Activated CD4-positive, alpha-beta memory T cell treated with anti-CD3 and anti-CD28 coated beads for 36 hours (primary cell): ENCODE measurements at regions of chr12 and their contacts with region 1.

Region 1: DNA sequence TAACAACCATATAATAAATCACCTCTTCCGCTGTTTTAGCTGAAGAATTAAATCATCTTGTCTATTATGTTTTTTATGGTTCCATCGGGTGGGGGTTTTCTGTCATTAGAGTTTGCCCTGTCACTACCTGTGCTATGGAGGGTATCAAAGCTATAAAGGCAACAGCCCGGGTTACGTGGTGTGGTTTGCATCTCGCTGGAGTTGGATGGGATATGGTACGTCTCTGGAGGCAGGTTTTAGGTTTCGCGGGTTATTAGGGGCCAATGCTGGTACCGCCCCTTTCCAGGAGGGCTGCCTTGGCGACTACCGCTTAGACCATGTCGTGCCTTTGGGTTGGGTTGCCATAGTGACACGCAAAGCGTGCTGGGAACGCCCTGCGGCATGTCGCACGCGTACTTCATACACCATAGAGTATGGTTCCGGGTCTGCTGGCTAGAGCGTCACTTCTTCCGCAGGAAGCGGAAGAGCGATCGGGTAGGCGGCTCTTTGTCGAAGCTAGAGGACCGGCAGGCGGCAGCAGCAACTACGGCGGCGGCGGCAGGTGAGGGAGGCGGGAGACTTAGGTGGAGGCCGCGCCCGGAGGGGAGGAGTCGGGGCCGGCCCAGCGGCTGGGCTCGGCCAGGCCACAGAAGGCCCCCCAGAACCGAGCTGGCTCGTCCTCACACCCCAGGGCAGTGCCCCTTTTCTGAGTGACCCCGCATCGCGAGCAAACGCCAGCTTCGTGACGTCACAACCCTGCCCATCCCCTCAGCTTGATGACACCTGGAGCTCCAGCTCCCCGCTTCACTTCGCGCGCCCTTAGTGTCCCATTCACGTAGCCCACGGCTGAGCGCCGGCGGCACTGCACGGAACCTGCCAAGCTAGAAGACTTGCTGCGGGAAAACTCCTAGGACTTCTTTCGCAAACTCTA is at the start of gene ZC3H10:
- DNase-seq: peak; percentile 99
- H3K4me3 Mint-ChIP-seq: peak within 1 kb of the TSS; percentile 99
- H3K27ac Mint-ChIP-seq: peak within 1 kb of the TSS; percentile 100
- H3K4me1 Mint-ChIP-seq: peaks cover 29% of the 10 kb centered on the region
- H3K27me3 Mint-ChIP-seq: no peaks in the 10 kb centered on the region
- total RNA-seq, gene ZC3H10: 5.1 to 7.2 TPM

Region 2: DNA sequence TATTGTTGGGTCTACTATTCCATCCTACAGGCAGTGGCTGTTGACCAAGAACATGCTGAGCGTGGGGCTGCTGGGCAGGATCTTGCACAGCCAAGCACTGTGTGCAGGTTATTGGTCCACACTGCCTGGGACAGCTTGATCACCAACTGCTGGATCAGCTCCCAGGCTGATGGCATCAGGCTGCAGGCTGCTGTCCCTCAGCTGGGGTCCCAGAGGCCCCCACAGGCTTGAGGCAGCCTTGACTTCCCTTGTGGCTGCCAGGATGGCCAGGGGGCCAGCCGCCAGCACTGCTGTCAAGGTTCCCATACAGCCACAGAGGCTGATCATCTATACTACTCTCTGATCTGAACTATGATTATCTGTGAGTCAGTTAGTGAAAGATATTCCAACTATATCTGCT is 536.0 kb before region 1 on chr12:
- CTCF ChIA-PET with region 1: no interaction called
- POLR2A ChIA-PET with region 1: no interaction called
- intact Hi-C with region 1: no loop called
- DNase-seq: no peak
- H3K4me3 Mint-ChIP-seq: no peak overlapping the region
- H3K27ac Mint-ChIP-seq: no peak overlapping the region
- H3K4me1 Mint-ChIP-seq: no peaks in the 10 kb centered on the region
- H3K27me3 Mint-ChIP-seq: peaks cover 28% of the 10 kb centered on the region

Region 3: DNA sequence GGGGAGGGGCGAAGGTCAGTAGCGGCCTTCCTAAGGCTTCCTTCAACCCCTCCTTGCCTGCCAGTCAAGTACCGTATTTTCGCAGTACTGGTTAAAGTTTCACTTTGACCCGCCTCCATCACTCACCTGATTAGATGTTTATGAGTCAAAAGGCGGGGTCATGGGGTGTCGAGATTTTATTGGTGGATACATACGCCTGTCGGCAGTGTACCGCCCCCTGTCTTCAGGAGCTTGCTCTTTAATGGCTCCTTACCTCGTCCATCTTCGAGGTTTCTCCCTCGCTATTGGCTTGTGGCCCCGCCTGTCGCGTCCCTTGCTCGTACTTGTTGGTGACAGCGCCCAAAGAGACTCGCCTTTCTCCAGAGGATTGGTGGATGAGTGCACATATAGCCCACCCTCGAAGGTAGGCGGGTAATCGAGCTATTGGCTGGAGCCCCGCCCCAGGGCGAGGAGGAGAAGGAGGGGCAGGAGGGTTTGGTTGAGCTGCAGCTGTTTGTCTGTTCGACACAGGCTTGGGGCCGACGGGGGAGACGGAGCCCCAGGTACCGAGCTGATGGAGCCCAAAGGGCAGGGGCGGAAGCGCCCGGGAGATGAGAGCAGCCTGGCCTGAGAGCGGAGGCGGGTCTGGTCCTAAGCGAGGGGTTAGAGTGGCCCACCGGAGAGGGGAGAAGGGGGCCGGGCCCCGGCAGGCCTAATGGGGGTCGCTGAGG is 144.3 kb before region 1 on chr12 and contains the start of gene RAB5B:
- CTCF ChIA-PET with region 1: interaction called, 3 read pairs
- POLR2A ChIA-PET with region 1: interaction called, 10 read pairs
- intact Hi-C with region 1: loop called (anchors 1 kb)
- DNase-seq: peak; percentile 99
- H3K4me3 Mint-ChIP-seq: no peak within 1 kb of the TSS
- H3K27ac Mint-ChIP-seq: no peak within 1 kb of the TSS
- H3K4me1 Mint-ChIP-seq: peaks cover 19% of the 10 kb centered on the region
- H3K27me3 Mint-ChIP-seq: no peaks in the 10 kb centered on the region
- total RNA-seq, gene RAB5B: 44.8 to 46.4 TPM

Region 4: DNA sequence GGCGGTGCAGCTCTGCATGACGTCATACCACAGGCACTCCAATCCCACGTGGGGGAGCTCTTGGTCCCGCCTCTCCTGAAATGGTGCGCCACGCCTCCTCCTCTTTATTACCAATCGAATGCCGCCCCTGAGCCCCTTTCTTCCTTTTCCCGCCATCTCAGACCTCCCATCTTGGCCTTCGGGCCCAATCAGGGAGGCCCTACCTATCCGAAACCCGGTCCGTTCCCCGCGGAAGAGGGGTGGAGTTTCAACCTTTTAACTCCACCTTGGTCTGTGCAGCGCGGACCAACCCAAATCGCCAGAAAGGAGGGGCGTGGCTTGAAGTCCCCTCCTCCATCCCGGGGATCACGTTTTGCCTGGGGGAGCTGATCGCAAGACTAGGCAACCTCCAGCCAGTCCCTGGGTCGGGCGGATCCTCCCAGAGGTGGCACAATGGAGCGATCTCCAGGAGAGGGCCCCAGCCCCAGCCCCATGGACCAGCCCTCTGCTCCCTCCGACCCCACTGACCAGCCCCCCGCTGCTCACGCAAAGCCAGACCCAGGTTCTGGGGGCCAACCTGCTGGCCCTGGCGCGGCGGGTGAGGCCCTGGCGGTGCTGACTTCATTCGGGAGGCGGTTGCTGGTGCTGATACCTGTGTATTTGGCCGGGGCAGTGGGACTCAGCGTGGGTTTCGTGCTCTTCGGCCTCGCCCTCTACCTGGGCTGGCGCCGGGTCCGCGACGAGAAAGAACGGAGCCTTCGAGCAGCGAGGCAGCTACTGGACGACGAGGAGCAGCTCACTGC is 10.0 kb after region 1 on chr12 and contains the start of gene ESYT1:
- CTCF ChIA-PET with region 1: interaction called, 62 read pairs
- POLR2A ChIA-PET with region 1: interaction called, 45 read pairs
- intact Hi-C with region 1: loop called (anchors 1 kb)
- DNase-seq: peak; percentile 99
- H3K4me3 Mint-ChIP-seq: peak within 1 kb of the TSS; percentile 97
- H3K27ac Mint-ChIP-seq: peak within 1 kb of the TSS; percentile 93
- H3K4me1 Mint-ChIP-seq: peaks cover 60% of the 10 kb centered on the region
- H3K27me3 Mint-ChIP-seq: no peaks in the 10 kb centered on the region
- total RNA-seq, gene ESYT1: 142 to 146 TPM

Region 5: DNA sequence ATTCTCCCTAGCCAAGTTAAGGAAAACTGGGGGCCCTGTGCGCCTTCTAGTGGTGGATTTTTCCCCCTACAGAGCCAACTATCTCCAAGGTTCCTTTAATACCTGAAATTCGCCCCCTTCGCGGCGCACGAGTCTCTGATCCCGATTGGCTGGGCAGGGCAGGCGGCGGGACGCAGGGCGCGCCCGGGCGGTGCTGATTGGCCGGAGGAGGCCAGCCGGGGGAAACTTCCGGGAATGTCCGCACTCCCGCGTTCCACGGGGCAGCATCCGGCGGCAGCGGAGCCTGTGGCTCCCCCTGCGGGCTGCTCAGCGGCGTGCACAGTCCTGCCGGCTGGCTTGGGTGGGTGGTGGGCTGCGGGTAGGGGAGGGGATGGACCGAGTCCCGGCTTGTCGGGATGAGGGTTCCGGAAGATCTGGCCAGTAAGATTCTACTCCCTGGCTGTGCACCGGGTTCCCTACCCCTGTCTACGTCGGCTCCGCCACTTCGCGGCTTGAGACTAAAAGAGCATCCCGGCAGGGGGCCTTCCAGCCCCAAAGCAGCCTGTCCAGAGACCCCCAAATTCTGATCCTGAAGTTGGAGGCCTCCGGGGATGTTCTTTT is 106.2 kb after region 1 on chr12 and contains the start of gene NABP2:
- CTCF ChIA-PET with region 1: interaction called, 38 read pairs
- POLR2A ChIA-PET with region 1: interaction called, 20 read pairs
- intact Hi-C with region 1: loop called (anchors 1 kb)
- DNase-seq: peak; percentile 97
- H3K4me3 Mint-ChIP-seq: peak within 1 kb of the TSS; percentile 96
- H3K27ac Mint-ChIP-seq: peak within 1 kb of the TSS; percentile 80
- H3K4me1 Mint-ChIP-seq: peaks cover 33% of the 10 kb centered on the region
- H3K27me3 Mint-ChIP-seq: no peaks in the 10 kb centered on the region
- total RNA-seq, gene NABP2: 62.0 to 62.2 TPM

Region 6: DNA sequence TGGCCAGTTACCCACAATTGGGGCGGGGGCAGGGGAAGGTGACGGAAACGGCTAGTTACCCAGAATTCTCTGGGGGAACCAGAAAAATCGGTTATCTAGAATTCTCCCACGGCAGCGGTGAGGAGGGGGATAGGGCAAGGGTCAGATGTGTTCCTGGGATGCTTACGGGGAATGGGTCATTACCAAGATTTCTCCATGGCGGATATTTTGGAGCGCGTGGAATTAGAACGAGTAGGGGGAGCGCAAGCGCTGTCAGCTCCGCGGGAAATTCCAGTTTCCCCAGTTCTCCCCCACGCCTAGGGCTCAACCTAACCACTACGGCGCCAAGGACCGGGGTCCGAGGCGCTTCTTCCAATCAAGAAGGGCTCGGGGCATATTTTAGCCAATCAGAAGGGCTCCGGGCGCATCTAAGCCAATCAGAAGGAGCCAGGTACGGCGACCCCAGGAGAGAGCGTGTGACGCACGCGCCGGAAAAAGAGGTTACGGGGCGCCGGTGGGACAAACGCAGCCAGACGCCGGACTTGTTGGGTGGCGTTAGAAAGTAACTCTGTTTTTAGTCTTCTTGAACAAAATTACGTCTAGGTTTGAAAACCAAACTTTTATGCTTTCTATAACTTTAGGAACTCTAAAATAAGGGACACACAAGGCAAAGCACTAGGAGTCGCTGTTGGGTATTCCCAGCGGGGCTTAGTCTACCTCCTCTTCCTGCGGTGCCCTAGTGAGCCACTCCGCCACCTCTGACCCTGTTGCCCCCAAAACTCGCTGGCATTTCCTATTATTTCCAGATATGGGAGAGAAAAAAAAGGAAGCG is 215.9 kb after region 1 on chr12 and contains the start of gene PAN2:
- CTCF ChIA-PET with region 1: no interaction called
- POLR2A ChIA-PET with region 1: interaction called, 4 read pairs
- intact Hi-C with region 1: loop called (anchors 2 kb)
- DNase-seq: peak; percentile 97
- H3K4me3 Mint-ChIP-seq: peak within 1 kb of the TSS; percentile 94
- H3K27ac Mint-ChIP-seq: peak within 1 kb of the TSS; percentile 99
- H3K4me1 Mint-ChIP-seq: peaks cover 43% of the 10 kb centered on the region
- H3K27me3 Mint-ChIP-seq: no peaks in the 10 kb centered on the region
- total RNA-seq, gene PAN2: 49.0 to 51.2 TPM

Region 7: GRCh38 chr12:56398324-56398723 is 280.3 kb after region 1 on chr12:
- CTCF ChIA-PET with region 1: no interaction called
- POLR2A ChIA-PET with region 1: no interaction called
- intact Hi-C with region 1: no loop called
- DNase-seq: no peak
- H3K4me3 Mint-ChIP-seq: no peak overlapping the region
- H3K27ac Mint-ChIP-seq: no peak overlapping the region
- H3K4me1 Mint-ChIP-seq: no peaks in the 10 kb centered on the region
- H3K27me3 Mint-ChIP-seq: no peaks in the 10 kb centered on the region

Region 8: GRCh38 chr12:57001448-57001906 is 883.4 kb after region 1 on chr12:
- CTCF ChIA-PET with region 1: no interaction called
- POLR2A ChIA-PET with region 1: no interaction called
- intact Hi-C with region 1: no loop called
- DNase-seq: peak; percentile 84
- H3K4me3 Mint-ChIP-seq: no peak overlapping the region
- H3K27ac Mint-ChIP-seq: peak overlapping the region; percentile 35
- H3K4me1 Mint-ChIP-seq: peaks cover 70% of the 10 kb centered on the region
- H3K27me3 Mint-ChIP-seq: no peaks in the 10 kb centered on the region